ENCODE measurements at regions of chr9 and their contacts with region 1.

Region 1: GRCh38 chr9:136283291-136284235 is 20.3 kb downstream of the CCDC187 start:
- DNase-seq: peak; percentile 87
- H3K27ac ChIP-seq: no peak overlapping the region
- CTCF ChIP-seq: peak; percentile 99

Region 2: DNA sequence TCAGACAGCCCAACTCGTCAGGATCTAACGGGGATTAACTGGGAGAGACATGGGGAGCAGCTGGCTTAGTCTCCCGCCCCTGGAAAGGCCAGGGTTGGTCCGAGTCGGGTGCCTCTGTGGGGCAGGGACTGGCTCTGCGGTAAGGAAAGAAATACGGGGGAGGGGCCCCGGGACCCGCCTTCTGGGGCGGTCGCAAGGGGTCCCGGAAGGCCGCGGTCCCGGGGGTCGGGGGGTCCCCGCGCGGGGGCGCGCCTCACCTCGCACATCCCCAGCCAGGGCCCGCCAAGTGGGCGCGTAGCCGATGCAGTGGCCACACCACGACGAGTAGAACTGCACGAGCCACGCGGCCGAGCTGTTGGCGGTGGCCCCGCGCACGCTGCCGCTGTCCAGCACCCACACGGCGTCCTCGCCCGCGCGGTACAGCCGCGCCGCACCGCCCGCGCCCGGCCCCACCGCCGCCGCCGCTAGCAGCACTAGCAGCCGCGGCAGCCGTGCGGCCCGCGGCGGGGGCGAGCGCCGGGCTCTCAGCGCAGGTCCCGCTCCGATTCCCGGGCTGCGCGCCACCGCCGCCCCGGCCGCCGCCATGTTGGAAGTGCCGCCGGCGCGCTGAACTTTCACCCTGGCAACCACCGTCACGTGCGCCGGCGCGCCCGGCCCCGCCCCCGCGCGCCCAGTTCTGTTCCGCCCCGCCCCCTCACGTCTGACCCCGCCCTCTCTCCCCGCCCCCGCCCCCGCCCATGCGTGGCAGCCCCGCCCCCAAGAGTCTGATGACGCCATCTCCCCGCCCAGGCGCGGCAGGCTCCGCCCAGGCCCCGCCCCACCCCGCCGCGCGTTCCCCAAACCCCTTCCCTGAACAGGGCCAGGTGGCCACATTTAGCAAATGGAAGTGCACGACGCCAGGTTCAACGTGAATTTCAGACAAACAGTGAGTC is 38.1 kb before region 1 on chr9 and contains the start of gene QSOX2:
- CTCF ChIA-PET with region 1: interaction called, 10 read pairs
- POLR2A ChIA-PET with region 1: no interaction called
- DNase-seq: peak; percentile 92
- H3K27ac ChIP-seq: peak within 1 kb of the TSS; percentile 64
- CTCF ChIP-seq: no peak

Region 3: DNA sequence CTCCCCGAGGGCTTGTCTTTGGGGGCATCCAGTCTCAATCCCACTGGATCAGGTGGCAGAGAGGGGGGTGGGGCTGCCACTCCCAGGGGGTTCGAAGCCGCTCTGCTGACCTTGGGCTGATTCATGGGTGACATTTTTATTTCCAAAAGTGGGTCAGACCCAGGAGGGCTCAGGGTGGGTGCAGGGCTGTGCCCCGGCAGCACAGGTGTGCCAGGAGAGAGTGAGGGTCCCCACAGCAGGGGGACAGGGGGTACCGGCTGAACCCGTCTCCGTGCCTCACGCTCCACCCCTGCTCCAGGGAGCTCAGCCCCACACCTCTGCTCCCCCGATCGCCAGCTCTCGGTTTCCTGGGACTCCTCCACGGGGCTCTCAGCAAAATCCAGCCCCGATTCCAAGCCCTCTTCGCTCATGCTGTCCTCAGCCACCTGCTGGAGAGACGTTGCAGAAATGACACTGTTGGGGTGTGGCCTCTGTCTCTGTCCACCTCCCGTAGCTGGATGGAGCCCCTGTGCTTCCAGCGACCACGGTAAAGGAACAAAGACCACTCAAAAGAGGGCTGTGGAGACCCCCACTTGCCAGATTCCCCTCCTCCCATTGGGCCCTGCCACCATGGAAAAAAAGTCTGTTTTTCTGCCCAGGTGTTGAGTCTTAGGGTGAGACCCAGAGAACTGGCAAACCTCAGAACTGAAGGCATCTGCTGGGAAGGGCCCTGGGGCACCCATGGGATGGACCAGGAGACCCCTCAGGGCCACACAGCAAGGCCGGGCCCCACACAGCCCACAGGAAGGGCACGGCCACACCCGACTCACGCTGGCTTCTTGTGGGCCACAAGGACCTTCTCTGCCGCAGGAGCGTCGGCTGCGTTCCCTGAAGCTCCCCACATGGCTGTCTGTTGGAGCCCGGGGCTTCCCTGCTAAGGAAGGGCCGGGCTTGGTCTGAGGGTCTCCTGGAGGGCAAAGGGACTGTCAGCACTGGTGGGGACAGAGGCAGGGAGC is 27.4 kb before region 1 on chr9:
- CTCF ChIA-PET with region 1: interaction called, 13 read pairs
- POLR2A ChIA-PET with region 1: no interaction called
- DNase-seq: peak; percentile 35
- H3K27ac ChIP-seq: no peak overlapping the region
- CTCF ChIP-seq: no peak